ENCODE measurements at regions of chr3 and their contacts with region 1.

Region 1: GRCh38 chr3:40524568-40525285 is at the start of gene ZNF621:
- DNase-seq: peak; percentile 88
- ATAC-seq: peak; percentile 99
- H3K4me3 Mint-ChIP-seq: peak within 1 kb of the TSS; percentile 93
- H3K27ac Mint-ChIP-seq: peak within 1 kb of the TSS; percentile 91
- H3K4me1 Mint-ChIP-seq: peaks cover 18% of the 10 kb centered on the region
- H3K27me3 Mint-ChIP-seq: no peaks in the 10 kb centered on the region
- CTCF ChIP-seq: no peak
- total RNA-seq, gene ZNF621: 20.2 and 25.8 TPM in 2 replicates

Region 2: DNA sequence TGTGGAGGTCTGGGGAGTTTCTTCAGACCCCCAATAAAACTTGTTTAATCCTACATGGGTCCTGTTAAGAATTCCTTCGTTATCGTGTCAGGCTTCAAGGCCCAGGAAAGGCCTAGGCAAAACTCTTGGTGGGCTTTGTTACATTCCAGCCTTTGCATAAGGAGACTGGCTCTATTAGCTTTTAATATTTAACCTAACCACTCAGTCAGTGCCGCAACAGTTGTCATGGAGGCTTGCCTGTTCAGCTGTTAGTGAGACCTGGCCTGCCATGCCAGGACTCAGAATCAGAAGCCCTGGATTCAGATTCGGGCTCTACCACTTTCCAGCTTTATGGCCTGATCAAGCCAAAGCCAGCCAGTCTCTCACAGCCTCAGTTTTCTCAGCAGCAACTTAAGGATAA is 195.7 kb before region 1 on chr3:
- CTCF ChIA-PET with region 1: no interaction called
- POLR2A ChIA-PET with region 1: no interaction called
- intact Hi-C with region 1: loop called (anchors 5 kb)
- DNase-seq: no peak
- ATAC-seq: no peak
- H3K4me3 Mint-ChIP-seq: no peak overlapping the region
- H3K27ac Mint-ChIP-seq: no peak overlapping the region
- H3K4me1 Mint-ChIP-seq: peaks cover 4% of the 10 kb centered on the region
- H3K27me3 Mint-ChIP-seq: peaks cover 2% of the 10 kb centered on the region
- CTCF ChIP-seq: no peak

Region 3: GRCh38 chr3:40452876-40453730 is 71.6 kb before region 1 on chr3:
- CTCF ChIA-PET with region 1: no interaction called
- POLR2A ChIA-PET with region 1: interaction called, 24 read pairs
- intact Hi-C with region 1: loop called (anchors 1 kb)
- DNase-seq: peak; percentile 81
- ATAC-seq: peak; percentile 92
- H3K4me3 Mint-ChIP-seq: peak overlapping the region; percentile 96
- H3K27ac Mint-ChIP-seq: peak overlapping the region; percentile 98
- H3K4me1 Mint-ChIP-seq: peaks cover 36% of the 10 kb centered on the region
- H3K27me3 Mint-ChIP-seq: no peaks in the 10 kb centered on the region
- CTCF ChIP-seq: no peak

Region 4: GRCh38 chr3:40476478-40477470 is 48.0 kb before region 1 on chr3 and contains the start of gene ZNF619:
- CTCF ChIA-PET with region 1: interaction called, 3 read pairs
- POLR2A ChIA-PET with region 1: interaction called, 32 read pairs
- intact Hi-C with region 1: loop called (anchors 1 kb)
- DNase-seq: peak; percentile 64
- ATAC-seq: peak; percentile 97
- H3K4me3 Mint-ChIP-seq: peak within 1 kb of the TSS; percentile 93
- H3K27ac Mint-ChIP-seq: peak within 1 kb of the TSS; percentile 94
- H3K4me1 Mint-ChIP-seq: peaks cover 27% of the 10 kb centered on the region
- H3K27me3 Mint-ChIP-seq: no peaks in the 10 kb centered on the region
- CTCF ChIP-seq: no peak
- total RNA-seq, gene ZNF619: 14.9 and 16.7 TPM in 2 replicates

Region 5: GRCh38 chr3:40505599-40506462 is 18.9 kb before region 1 on chr3 and contains the start of gene ZNF620:
- CTCF ChIA-PET with region 1: interaction called, 5 read pairs
- POLR2A ChIA-PET with region 1: interaction called, 17 read pairs
- intact Hi-C with region 1: loop called (anchors 1 kb)
- DNase-seq: peak; percentile 35
- ATAC-seq: peak; percentile 83
- H3K4me3 Mint-ChIP-seq: peak within 1 kb of the TSS; percentile 96
- H3K27ac Mint-ChIP-seq: peak within 1 kb of the TSS; percentile 79
- H3K4me1 Mint-ChIP-seq: peaks cover 13% of the 10 kb centered on the region
- H3K27me3 Mint-ChIP-seq: no peaks in the 10 kb centered on the region
- CTCF ChIP-seq: no peak
- total RNA-seq, gene ZNF620: 3.6 and 4.0 TPM in 2 replicates

Region 6: GRCh38 chr3:41158947-41159346 is 634.2 kb after region 1 on chr3:
- CTCF ChIA-PET with region 1: no interaction called
- POLR2A ChIA-PET with region 1: no interaction called
- intact Hi-C with region 1: no loop called
- DNase-seq: no peak
- ATAC-seq: no peak
- H3K4me3 Mint-ChIP-seq: no peak overlapping the region
- H3K27ac Mint-ChIP-seq: no peak overlapping the region
- H3K4me1 Mint-ChIP-seq: no peaks in the 10 kb centered on the region
- H3K27me3 Mint-ChIP-seq: peaks cover 9% of the 10 kb centered on the region
- CTCF ChIP-seq: no peak

Measured in activated B cell treated with CpG ODN at 0.5 μM for 24 hours (primary cell).